CD4-positive, alpha-beta T cell (primary cell): ENCODE measurements at regions of chr5 and their contacts with region 1.

Region 1: GRCh38 chr5:56050551-56051255 is 55.9 kb upstream of the IL6ST start:
- DNase-seq: peak in 3 of 14 experiments; percentile 37 to 56 (median 44)
- ATAC-seq: peak; percentile 73
- H3K4me3 ChIP-seq: peak overlapping the region; percentile 4
- H3K4me3 Mint-ChIP-seq: peak overlapping the region; percentile 77
- H3K27ac ChIP-seq: peak overlapping the region; percentile 40 to 54
- H3K27ac Mint-ChIP-seq: peak overlapping the region; percentile 84
- H3K4me1 ChIP-seq: peaks cover 59% of the 10 kb centered on the region
- H3K4me1 Mint-ChIP-seq: peaks cover 74% of the 10 kb centered on the region
- H3K27me3 ChIP-seq: no peaks in the 10 kb centered on the region
- H3K27me3 Mint-ChIP-seq: no peaks in the 10 kb centered on the region
- CTCF ChIP-seq: no peak

Region 2: GRCh38 chr5:55847837-55848236 is 202.9 kb before region 1 on chr5:
- CTCF ChIA-PET with region 1: no interaction called
- POLR2A ChIA-PET with region 1: no interaction called
- intact Hi-C with region 1: no loop called
- DNase-seq: no peak
- ATAC-seq: no peak
- H3K4me3 ChIP-seq: no peak overlapping the region
- H3K4me3 Mint-ChIP-seq: no peak overlapping the region
- H3K27ac ChIP-seq: no peak overlapping the region
- H3K27ac Mint-ChIP-seq: no peak overlapping the region
- H3K4me1 ChIP-seq: no peaks in the 10 kb centered on the region
- H3K4me1 Mint-ChIP-seq: no peaks in the 10 kb centered on the region
- H3K27me3 ChIP-seq: no peaks in the 10 kb centered on the region
- H3K27me3 Mint-ChIP-seq: peaks cover 9% of the 10 kb centered on the region
- CTCF ChIP-seq: no peak

Region 3: DNA sequence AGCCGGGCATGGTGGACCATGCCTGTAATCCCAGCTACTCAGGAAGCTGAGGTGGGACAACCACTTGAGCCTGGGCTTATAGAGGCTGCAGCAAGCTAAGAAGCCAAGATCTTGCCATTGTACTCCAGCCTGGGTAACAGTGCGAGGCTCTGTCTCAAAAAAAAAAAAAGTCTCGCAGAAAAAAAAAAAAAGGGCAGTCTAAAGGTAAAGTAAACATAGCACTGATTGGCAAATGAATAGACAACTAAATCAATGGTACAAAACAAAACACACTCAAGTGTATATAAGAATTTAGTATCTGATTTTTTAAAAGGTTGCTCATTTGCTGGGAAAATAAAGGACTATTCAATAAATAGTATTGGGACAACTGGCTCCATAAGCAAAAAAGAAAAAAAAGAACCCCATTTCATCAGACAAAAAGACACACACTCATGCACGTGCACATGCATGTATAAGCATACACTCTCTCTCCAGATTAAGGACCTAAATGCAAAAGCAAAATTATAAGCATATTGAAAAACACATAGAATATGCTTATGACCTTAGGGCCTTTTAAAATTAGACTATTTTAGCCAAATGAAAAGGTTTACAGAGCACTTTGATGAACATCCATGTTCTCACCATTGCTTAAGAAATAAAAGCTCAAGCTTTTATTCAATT is 61.6 kb before region 1 on chr5:
- CTCF ChIA-PET with region 1: no interaction called
- POLR2A ChIA-PET with region 1: interaction called, 87 read pairs
- intact Hi-C with region 1: no loop called
- DNase-seq: peak in 1 of 14 experiments; percentile 28
- ATAC-seq: peak; percentile 30
- H3K4me3 ChIP-seq: peak overlapping the region; percentile 25
- H3K4me3 Mint-ChIP-seq: peak overlapping the region; percentile 97
- H3K27ac ChIP-seq: peak overlapping the region in 1 of 2 donors; percentile 26
- H3K27ac Mint-ChIP-seq: peak overlapping the region; percentile 94
- H3K4me1 ChIP-seq: peaks cover 24% of the 10 kb centered on the region
- H3K4me1 Mint-ChIP-seq: peaks cover 85% of the 10 kb centered on the region
- H3K27me3 ChIP-seq: no peaks in the 10 kb centered on the region
- H3K27me3 Mint-ChIP-seq: no peaks in the 10 kb centered on the region
- CTCF ChIP-seq: no peak

Region 4: DNA sequence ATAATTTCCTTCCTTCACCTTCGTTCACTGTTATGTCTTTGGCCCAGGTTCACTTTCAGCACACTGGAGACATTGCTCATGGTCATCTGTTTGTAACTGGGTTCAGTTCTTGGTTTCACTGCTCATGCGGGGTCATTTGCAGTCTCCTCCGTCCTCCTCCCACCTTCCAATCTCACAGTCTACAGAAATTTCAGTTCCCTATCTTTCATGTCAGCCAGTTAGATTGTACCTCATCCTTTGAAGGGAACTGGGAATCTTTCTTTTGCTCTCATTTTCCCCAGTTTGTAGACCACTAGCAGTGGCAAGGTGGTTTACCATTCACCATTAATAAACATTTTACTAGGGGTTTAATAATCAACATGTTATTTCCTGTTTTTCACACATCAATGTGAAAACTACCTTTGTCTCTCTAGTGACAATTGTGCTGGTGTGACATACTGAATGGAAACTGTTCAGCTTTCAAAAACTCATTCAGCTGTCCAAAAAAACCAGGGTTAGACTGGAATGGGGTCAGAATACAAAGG is 44.9 kb after region 1 on chr5:
- CTCF ChIA-PET with region 1: no interaction called
- POLR2A ChIA-PET with region 1: interaction called, 11 read pairs
- intact Hi-C with region 1: loop called in 1 of 2 experiments (anchors 5 kb)
- DNase-seq: no peak
- ATAC-seq: no peak
- H3K4me3 ChIP-seq: no peak overlapping the region
- H3K4me3 Mint-ChIP-seq: peak overlapping the region; percentile 30
- H3K27ac ChIP-seq: peak overlapping the region; percentile 7 to 63
- H3K27ac Mint-ChIP-seq: peak overlapping the region; percentile 88
- H3K4me1 ChIP-seq: peaks cover 71% of the 10 kb centered on the region
- H3K4me1 Mint-ChIP-seq: peaks cover 88% of the 10 kb centered on the region
- H3K27me3 ChIP-seq: no peaks in the 10 kb centered on the region
- H3K27me3 Mint-ChIP-seq: no peaks in the 10 kb centered on the region
- CTCF ChIP-seq: no peak